Ascending aorta (tissue), 2 donors: ENCODE measurements at regions of chr11 and their contacts with region 1.

Region 1: DNA sequence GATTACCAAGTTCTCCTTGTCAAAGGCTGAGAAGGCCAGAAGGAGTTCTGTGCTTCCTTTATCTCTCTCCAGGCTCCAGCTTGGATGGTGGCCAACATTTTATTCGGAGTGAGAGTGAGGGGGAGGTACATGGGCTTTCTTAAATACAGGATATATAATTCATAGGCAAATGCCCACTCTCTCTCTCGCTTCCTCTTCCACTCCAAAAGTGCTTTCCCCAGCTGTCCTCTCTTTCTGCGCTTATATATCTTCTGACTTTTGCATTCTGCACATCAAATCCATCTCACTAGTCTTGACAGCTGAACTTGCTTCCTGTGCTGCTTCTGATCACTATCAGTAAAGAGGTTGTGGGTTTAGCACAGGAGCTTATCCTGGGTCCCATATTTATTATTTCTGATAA is 125.4 kb upstream of the ARHGAP20 start:
- DNase-seq: no peak
- H3K4me3 ChIP-seq: no peak overlapping the region
- H3K27ac ChIP-seq: no peak overlapping the region
- H3K4me1 ChIP-seq: no peaks in the 10 kb centered on the region
- H3K27me3 ChIP-seq: no peaks in the 10 kb centered on the region
- CTCF ChIP-seq: no peak

Region 2: GRCh38 chr11:110691926-110692325 is 145.7 kb before region 1 on chr11:
- intact Hi-C with region 1: no loop called
- DNase-seq: no peak
- H3K4me3 ChIP-seq: no peak overlapping the region
- H3K27ac ChIP-seq: no peak overlapping the region
- H3K4me1 ChIP-seq: no peaks in the 10 kb centered on the region
- H3K27me3 ChIP-seq: no peaks in the 10 kb centered on the region
- CTCF ChIP-seq: no peak

Region 3: GRCh38 chr11:110793556-110793955 is 44.0 kb before region 1 on chr11:
- intact Hi-C with region 1: loop called (anchors 5 kb)
- DNase-seq: no peak
- H3K4me3 ChIP-seq: no peak overlapping the region
- H3K27ac ChIP-seq: no peak overlapping the region
- H3K4me1 ChIP-seq: no peaks in the 10 kb centered on the region
- H3K27me3 ChIP-seq: no peaks in the 10 kb centered on the region
- CTCF ChIP-seq: no peak

Region 4: GRCh38 chr11:110919241-110919922 is 81.8 kb after region 1 on chr11:
- intact Hi-C with region 1: no loop called
- DNase-seq: no peak
- H3K4me3 ChIP-seq: no peak overlapping the region
- H3K27ac ChIP-seq: no peak overlapping the region
- H3K4me1 ChIP-seq: peaks cover 0 to 9% of the 10 kb centered on the region in 2 donors
- H3K27me3 ChIP-seq: no peaks in the 10 kb centered on the region
- CTCF ChIP-seq: no peak

Region 5: GRCh38 chr11:112096194-112096593 is 1258.6 kb after region 1 on chr11:
- intact Hi-C with region 1: no loop called
- DNase-seq: no peak
- H3K4me3 ChIP-seq: no peak overlapping the region
- H3K27ac ChIP-seq: no peak overlapping the region
- H3K4me1 ChIP-seq: no peaks in the 10 kb centered on the region
- H3K27me3 ChIP-seq: no peaks in the 10 kb centered on the region
- CTCF ChIP-seq: no peak